Dorsolateral prefrontal cortex (tissue), 120 donors: ENCODE measurements at regions of chr12 and their contacts with region 1.

Region 1: DNA sequence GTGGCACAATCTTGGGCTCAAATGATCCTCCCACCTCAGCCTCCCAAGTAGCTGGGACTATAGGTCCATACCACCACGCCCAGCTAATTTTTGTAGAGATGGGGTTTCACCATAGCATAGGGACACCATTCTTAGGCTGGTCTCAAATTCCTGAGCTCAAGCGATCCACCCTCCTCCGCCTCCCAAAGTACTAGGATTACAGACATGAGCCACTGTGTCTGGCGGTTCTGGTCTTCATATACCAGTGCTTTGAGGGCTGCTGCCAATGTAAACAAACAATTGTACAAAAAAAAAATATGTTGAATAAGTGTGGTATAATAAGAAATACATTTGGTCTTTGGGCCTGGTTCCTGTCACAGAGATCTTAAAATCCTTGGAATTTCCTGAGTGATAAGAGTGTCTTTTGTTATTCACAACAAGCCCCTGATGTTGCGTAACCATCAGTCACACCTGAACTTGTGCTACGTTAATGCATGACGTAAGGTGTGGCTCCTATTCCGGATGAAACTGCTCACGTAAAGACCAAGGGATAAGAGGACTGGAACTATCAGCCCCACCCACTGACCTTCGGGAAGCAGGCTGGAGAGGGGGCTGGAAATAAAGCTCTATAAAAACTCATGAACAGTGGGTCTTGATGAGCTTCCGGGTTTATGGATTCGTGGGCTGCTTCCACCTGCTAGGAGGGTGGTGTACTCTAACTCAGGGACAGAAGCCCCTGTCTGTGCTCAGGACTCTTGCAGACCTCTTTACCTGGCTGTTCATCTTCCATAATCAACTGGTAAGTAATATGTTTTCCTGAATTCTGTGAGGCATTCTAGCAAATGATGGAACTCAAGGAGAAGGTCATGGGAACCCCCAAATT is 16.5 kb upstream of the RIMKLB start:
- DNase-seq: no peak
- H3K4me3 ChIP-seq: peak overlapping the region in 21 of 59 donors; percentile 0 to 49 (median 25)
- H3K27ac ChIP-seq: peak overlapping the region in 35 of 59 donors; percentile 1 to 81 (median 51)
- H3K27me3 ChIP-seq: no peaks in the 10 kb centered on the region
- CTCF ChIP-seq: no peak

Region 2: DNA sequence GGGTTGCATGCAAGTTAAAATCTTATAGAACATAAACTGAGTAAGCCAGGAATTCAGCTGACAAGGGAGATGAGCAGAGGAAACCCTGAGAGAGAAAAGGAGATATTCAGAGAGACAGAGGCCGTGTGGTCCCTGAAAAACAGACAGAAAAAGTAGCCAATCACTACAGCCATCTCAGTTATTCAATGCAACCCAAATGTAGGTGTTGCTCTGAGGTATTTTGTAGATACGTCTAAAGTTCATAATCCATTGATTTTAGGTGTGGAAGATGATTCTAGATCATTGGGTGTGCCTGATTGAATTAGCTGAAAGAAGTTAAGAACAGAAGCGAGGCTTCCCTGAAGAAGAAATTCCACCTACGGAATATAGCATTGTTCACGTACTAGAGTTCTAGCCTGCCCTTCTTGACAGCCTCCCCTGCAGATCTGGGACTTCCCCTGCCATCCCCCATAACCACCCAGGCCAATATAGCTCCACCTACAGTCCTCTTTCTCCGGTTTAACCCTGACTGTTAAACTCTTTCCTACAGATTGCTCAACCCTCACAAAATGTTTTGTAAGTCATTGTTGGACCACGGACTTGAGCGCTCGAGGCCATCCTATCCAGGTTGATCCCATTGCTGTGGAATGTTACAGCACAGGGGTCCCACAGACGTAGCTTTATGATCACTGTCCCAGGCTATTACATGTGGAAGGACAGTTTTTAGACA is 90.3 kb before region 1 on chr12:
- intact Hi-C with region 1: no loop called
- DNase-seq: no peak
- H3K4me3 ChIP-seq: no peak overlapping the region
- H3K27ac ChIP-seq: no peak overlapping the region
- H3K27me3 ChIP-seq: no peaks in the 10 kb centered on the region
- CTCF ChIP-seq: no peak

Region 3: DNA sequence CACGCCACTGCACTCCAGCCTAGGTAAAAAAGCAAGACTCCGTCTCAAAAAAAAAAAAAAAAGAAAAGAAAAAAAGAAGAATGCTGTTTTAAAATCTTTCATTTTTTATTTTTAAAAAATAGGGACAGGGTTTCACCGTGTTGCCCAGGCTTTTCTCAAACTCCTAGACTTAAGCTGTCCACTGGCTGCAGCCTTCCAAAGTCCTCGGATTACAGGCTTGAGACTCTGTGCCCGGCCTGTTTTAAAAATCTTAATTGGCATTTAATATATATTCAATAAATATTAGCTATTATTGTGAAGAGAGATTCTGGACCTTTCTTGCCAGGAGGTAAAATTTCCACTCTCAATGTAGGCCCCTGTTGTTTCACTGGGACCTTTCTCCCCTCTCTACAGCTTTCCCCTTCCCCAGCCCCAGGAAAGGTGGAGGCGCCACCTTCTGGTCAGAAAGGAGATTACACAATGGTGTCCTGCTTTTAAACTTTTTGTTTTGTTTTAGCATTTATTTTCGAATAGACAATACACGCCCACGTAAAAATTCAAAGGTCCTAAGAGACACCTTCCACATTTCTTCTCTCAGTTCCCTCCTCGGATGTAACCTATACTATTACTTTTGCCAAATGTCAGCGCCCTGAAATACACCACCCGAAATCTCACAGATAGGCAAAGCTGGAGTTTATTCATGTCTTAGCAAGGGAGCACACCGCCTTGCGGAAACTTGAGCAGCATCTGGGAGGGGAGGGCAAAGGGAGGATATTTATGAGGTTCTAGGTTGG is 209.2 kb after region 1 on chr12:
- intact Hi-C with region 1: loop called (anchors 5 kb)
- DNase-seq: peak in 3 of 10 donors; percentile 8 to 52 (median 22)
- H3K4me3 ChIP-seq: peak overlapping the region in 57 of 59 donors; percentile 9 to 64 (median 46)
- H3K27ac ChIP-seq: peak overlapping the region in 1 of 59 donors; percentile 36
- H3K27me3 ChIP-seq: no peaks in the 10 kb centered on the region
- CTCF ChIP-seq: peak; percentile 74 to 95 (median 89)